ENCODE measurements at regions of chr16 and their contacts with region 1.

Region 1: GRCh38 chr16:57648590-57649442 is 19.3 kb upstream of the ADGRG3 start:
- DNase-seq: peak; percentile 93
- H3K4me3 Mint-ChIP-seq: no peak overlapping the region
- H3K27ac Mint-ChIP-seq: peak overlapping the region; percentile 44
- H3K4me1 Mint-ChIP-seq: peaks cover 17% of the 10 kb centered on the region
- H3K27me3 Mint-ChIP-seq: no peaks in the 10 kb centered on the region

Region 2: GRCh38 chr16:57585051-57585687 is 63.6 kb before region 1 on chr16:
- CTCF ChIA-PET with region 1: interaction called, 162 read pairs
- intact Hi-C with region 1: no loop called
- DNase-seq: no peak
- H3K4me3 Mint-ChIP-seq: no peak overlapping the region
- H3K27ac Mint-ChIP-seq: no peak overlapping the region
- H3K4me1 Mint-ChIP-seq: peaks cover 6% of the 10 kb centered on the region
- H3K27me3 Mint-ChIP-seq: no peaks in the 10 kb centered on the region

Region 3: DNA sequence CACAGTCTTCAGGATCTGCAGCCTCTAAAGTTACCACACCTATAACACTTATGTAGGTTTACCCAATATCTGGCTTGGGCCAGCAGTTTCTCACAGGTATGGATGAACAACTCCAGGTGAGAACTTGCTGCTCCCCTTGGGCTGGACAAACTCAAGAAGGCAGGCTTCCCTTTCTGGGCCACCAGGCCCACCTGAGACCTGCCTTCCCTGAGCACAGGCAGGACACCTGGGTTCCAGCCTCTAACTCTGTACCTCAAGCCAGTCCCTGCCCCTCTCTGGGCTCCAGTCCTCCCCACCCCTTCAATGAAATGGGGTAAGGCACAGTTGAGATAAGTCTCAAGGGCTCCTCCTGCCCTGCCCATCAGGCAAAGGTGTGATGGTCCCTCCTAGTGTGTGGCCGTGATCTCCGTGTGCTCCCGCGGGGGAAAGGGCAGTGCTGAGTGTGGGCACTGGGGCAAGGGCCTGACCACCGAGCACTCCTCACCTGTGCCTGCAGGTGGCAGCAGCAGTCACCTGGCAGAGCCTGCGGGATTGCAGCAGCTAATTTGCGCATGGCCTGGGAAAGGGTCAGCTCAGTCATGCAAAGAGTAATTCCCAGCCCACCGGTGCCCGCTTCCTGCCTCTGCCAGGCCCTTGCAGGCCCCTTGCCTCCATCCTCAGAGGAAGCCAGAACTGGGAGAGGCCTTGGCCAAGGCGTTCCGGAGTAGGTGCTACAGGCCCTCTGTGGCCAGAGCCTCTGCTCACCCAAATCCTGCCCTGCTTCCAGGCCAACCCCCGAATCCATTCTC is 48.6 kb before region 1 on chr16:
- CTCF ChIA-PET with region 1: interaction called, 91 read pairs
- intact Hi-C with region 1: loop called (anchors 1 kb)
- DNase-seq: peak; percentile 65
- H3K4me3 Mint-ChIP-seq: no peak overlapping the region
- H3K27ac Mint-ChIP-seq: no peak overlapping the region
- H3K4me1 Mint-ChIP-seq: peaks cover 25% of the 10 kb centered on the region
- H3K27me3 Mint-ChIP-seq: no peaks in the 10 kb centered on the region

Region 4: GRCh38 chr16:57609541-57610401 is 39.0 kb before region 1 on chr16:
- CTCF ChIA-PET with region 1: interaction called, 106 read pairs
- intact Hi-C with region 1: loop called (anchors 1 kb)
- DNase-seq: peak; percentile 92
- H3K4me3 Mint-ChIP-seq: peak overlapping the region; percentile 45
- H3K27ac Mint-ChIP-seq: peak overlapping the region; percentile 86
- H3K4me1 Mint-ChIP-seq: peaks cover 40% of the 10 kb centered on the region
- H3K27me3 Mint-ChIP-seq: no peaks in the 10 kb centered on the region

Region 5: GRCh38 chr16:57683636-57684545 is 35.1 kb after region 1 on chr16:
- CTCF ChIA-PET with region 1: no interaction called
- intact Hi-C with region 1: no loop called
- DNase-seq: no peak
- H3K4me3 Mint-ChIP-seq: no peak overlapping the region
- H3K27ac Mint-ChIP-seq: no peak overlapping the region
- H3K4me1 Mint-ChIP-seq: no peaks in the 10 kb centered on the region
- H3K27me3 Mint-ChIP-seq: no peaks in the 10 kb centered on the region

Region 6: GRCh38 chr16:57720142-57720575 is 71.3 kb after region 1 on chr16:
- CTCF ChIA-PET with region 1: interaction called, 3 read pairs
- intact Hi-C with region 1: loop called (anchors 1 kb)
- DNase-seq: peak; percentile 66
- H3K4me3 Mint-ChIP-seq: no peak overlapping the region
- H3K27ac Mint-ChIP-seq: no peak overlapping the region
- H3K4me1 Mint-ChIP-seq: no peaks in the 10 kb centered on the region
- H3K27me3 Mint-ChIP-seq: no peaks in the 10 kb centered on the region

Region 7: DNA sequence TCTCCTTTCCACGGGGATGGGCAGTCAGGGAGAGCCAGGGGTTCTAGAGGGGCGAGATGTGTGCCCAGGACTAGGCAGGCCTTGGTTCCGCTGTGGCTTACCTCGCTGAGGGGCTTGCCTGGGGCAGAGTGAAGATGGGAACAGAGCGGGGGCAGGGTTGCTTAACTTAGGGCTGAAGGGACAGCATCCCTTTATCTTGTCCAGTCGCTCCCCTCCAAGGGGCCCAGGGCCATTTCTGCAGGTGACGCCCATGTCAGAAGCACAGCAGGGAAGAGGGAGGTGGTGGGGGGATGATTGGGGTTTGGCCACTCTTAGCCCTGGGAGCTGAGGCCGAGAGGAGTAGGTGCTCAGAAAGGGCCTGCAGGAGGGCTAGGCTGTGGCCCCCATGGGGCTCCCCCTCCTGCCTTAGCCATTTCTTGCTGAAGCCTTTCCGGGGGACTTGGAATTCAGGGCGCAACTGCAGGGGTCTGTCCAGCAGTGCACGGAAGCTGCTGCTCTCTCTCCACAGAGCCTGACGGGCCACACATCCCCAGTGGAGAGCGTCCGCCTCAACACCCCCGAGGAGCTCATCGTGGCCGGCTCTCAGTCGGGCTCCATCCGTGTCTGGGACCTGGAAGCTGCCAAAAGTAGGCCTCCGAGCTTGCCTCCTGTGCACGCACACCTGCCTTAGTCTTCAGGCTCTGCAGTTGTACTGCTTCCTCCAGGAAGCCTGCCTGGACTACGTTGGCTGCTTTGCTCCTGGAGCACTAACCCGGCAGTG is 95.2 kb after region 1 on chr16:
- CTCF ChIA-PET with region 1: no interaction called
- intact Hi-C with region 1: no loop called
- DNase-seq: no peak
- H3K4me3 Mint-ChIP-seq: no peak overlapping the region
- H3K27ac Mint-ChIP-seq: no peak overlapping the region
- H3K4me1 Mint-ChIP-seq: no peaks in the 10 kb centered on the region
- H3K27me3 Mint-ChIP-seq: no peaks in the 10 kb centered on the region

Region 8: GRCh38 chr16:58114827-58115825 is 466.3 kb after region 1 on chr16:
- CTCF ChIA-PET with region 1: no interaction called
- intact Hi-C with region 1: no loop called
- DNase-seq: no peak
- H3K4me3 Mint-ChIP-seq: no peak overlapping the region
- H3K27ac Mint-ChIP-seq: no peak overlapping the region
- H3K4me1 Mint-ChIP-seq: peaks cover 5% of the 10 kb centered on the region
- H3K27me3 Mint-ChIP-seq: no peaks in the 10 kb centered on the region

Measured in activated naive CD4-positive, alpha-beta T cell treated with anti-CD3 and anti-CD28 coated beads for 36 hours (primary cell).